Activated CD8-positive, alpha-beta T cell treated with anti-CD3 and anti-CD28 coated beads for 36 hours (primary cell): ENCODE measurements at regions of chr19 and their contacts with region 1.

Region 1: DNA sequence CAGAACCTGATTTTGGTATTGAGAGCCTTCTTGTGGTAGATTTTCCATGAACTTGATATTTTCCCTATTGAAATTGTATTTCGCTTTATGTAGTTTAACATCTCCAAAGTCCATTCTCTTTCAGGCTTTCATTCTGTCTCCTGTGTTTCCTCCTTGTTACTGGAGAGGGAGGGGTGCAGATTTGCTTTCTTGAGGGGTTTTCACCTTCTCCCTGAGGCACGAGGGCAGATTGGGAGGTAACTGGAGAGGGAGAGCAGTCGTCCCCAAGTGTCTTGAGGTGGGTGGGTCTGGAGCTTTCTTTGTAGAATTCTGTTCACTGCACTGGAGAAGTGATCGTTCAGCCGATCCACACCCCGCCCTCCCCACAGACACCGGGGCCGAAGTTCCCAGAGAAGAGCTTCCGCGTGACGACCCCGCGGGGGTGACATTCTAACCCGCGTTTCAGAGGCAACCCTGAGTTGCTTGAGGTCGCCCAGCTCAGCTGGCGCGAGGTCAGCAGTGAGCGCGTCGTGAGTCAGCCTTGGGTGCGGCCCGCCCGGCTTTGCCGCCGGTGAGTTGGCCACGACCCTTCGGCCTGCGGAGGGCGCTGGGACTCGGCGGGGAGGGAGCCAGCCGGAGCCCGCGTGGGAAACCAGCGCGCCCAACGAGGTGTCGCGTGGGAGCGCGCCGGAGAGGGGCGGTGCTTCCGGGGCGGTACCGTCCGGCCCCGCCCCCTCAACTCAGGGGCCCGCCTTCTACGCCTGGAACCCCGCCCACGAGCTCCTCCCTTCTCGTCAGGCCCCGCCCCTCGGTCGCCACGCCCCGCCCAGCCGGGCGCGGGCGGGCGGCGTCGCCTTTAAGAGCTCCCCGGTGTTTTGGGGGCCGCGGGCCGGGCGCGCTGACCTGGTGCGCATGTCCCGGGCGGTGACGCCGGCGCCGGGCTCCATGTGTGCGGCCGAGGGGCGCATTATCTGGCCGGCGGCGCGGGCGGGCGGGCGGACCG is at the start of gene GATAD2A:
- DNase-seq: peak; percentile 93
- ATAC-seq: peak; percentile 85
- H3K4me3 Mint-ChIP-seq: peak within 1 kb of the TSS; percentile 97
- H3K27ac Mint-ChIP-seq: peak within 1 kb of the TSS; percentile 95
- H3K4me1 Mint-ChIP-seq: peaks cover 64% of the 10 kb centered on the region
- H3K27me3 Mint-ChIP-seq: no peaks in the 10 kb centered on the region
- CTCF ChIP-seq: no peak
- total RNA-seq, gene GATAD2A: 132 to 136 TPM

Region 2: DNA sequence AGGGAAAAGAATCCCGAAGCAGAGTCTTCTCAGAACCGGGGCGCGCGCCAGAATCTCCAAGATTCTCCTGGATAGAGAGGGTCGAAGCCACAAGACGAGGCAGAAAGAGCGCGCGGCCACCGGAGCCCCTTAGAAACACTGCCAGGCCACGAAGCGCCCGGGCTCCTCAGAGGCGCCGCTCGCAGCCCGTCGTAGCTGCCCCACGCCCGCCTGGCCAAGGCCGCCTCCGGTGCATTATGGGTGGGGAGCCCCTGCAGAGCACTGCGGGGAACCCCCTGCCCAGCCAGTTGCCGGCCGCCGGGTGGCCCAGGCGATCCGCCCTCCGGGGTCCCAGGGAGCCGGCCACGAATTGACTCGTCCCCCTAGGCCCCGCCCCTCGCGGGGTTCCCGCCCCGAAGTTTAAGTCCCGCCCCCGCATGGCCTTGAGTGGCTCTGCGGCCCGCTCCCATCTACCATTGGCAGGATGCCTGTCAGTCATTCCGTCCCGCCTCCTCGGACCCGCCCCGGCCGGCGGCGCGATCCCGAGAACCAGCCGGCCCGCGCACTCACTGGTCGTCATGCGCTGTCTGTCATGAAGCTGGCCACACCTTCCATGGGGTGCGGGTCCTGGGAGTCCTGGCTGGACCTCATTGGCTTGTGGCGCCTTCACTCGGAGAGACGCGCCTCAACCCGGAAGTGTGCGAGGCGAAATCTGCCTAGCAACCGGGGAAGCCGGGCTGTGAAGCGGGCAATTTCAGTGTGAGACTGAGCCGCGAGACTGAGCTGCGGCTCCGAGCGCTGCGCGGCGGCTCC is 19.9 kb before region 1 on chr19:
- CTCF ChIA-PET with region 1: interaction called, 7 read pairs
- POLR2A ChIA-PET with region 1: interaction called, 10 read pairs
- intact Hi-C with region 1: loop called (anchors 2 kb)
- DNase-seq: peak; percentile 100
- ATAC-seq: peak; percentile 93
- H3K4me3 Mint-ChIP-seq: peak overlapping the region; percentile 72
- H3K27ac Mint-ChIP-seq: peak overlapping the region; percentile 86
- H3K4me1 Mint-ChIP-seq: peaks cover 33% of the 10 kb centered on the region
- H3K27me3 Mint-ChIP-seq: no peaks in the 10 kb centered on the region
- CTCF ChIP-seq: no peak

Region 3: GRCh38 chr19:19436137-19436691 is 31.0 kb after region 1 on chr19:
- CTCF ChIA-PET with region 1: no interaction called
- POLR2A ChIA-PET with region 1: no interaction called
- intact Hi-C with region 1: no loop called
- DNase-seq: no peak
- ATAC-seq: no peak
- H3K4me3 Mint-ChIP-seq: no peak overlapping the region
- H3K27ac Mint-ChIP-seq: peak overlapping the region; percentile 58
- H3K4me1 Mint-ChIP-seq: peaks cover 51% of the 10 kb centered on the region
- H3K27me3 Mint-ChIP-seq: no peaks in the 10 kb centered on the region
- CTCF ChIP-seq: no peak

Region 4: DNA sequence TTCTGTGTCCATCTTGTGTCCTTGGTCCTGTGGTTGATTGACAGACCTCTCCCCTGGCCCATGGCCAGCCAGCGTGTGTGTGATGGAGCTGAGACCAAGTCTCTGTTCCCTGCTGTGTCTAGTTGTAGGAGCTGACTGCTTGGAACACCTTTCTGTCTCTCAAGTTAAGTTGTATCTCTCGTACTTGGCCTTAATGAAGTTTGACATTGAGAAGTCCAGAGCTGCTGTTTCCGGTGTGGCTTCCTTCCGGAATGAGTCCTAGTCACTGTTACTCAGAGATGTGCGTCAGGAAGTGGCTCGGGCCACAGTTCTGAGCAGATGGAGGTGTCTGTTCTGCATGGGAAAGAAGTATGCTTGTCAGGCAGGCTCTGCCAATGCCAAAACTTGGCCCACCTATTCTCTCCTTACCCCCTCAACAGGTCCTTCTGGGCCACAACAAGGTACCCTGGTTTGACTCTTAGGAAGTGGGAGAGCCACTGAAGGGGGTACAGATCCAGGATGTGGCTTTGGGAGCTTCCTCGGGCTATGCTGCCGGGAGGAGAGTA is 54.6 kb after region 1 on chr19:
- CTCF ChIA-PET with region 1: interaction called, 4 read pairs
- POLR2A ChIA-PET with region 1: interaction called, 32 read pairs
- intact Hi-C with region 1: loop called (anchors 5 kb)
- DNase-seq: peak; percentile 89
- ATAC-seq: peak; percentile 67
- H3K4me3 Mint-ChIP-seq: peak overlapping the region; percentile 89
- H3K27ac Mint-ChIP-seq: peak overlapping the region; percentile 100
- H3K4me1 Mint-ChIP-seq: peaks cover 85% of the 10 kb centered on the region
- H3K27me3 Mint-ChIP-seq: no peaks in the 10 kb centered on the region
- CTCF ChIP-seq: no peak